GM13976 (cell line): ENCODE measurements at regions of chr9 and their contacts with region 1.

Region 1: GRCh38 chr9:2132484-2133082 is 117.4 kb downstream of the SMARCA2 start:
- DNase-seq: no peak
- CTCF ChIP-seq: peak; percentile 41

Region 2: DNA sequence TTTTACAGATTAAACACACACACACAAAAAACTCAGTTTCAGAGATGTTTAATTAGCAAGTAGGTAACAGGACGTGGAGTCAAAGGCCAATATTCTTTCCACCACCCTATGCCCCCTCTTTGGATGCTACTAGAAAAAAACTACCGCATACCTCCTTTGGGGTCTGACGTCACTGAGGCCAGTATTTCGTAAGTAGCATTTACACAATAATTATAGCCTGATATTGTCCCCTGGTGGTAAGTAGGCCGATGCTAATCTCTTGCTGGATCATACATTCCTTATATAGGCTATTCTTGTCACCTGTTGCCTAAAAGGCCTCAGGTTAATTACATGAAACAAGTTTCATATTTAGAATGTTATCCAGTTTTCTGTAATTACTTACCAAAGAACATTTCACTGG is 138.4 kb before region 1 on chr9:
- in situ Hi-C with region 1: no loop called
- DNase-seq: no peak
- CTCF ChIP-seq: no peak

Region 3: DNA sequence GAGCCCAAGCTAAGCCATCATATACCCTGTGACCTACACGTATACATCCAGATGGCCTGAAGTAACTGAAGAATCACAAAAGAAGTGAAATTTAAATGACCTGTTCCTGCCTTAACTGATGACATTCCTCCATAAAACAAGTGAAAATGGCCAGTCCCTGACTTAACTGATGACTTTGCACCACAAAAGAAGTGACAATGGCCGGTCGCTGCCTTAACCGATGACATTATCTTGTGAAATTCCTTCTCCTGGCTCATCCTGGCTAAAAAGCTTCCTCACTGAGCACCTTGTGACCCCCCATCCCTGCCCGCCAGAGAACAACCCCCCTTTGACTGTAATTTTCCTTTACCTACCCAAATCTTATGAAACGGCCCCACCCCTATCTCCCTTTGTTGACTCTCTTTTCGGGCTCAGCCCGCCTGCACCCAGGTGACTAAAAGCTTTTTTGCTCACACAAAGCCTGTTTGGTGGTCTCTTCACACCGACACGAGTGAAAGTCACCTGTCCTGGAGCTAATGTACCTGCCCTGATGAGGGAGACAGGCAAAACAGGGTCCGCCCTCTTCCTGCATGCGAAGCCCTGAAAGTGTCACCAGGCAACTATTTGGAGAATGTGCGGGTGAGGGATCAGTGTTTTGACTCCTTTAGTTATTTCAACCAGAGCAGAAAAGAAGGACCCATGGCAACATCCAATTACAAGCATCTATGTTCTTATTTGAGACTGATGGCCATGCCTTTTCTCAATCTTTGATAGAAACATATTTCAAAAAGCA is 148.6 kb after region 1 on chr9:
- in situ Hi-C with region 1: no loop called
- DNase-seq: no peak
- CTCF ChIP-seq: no peak

Region 4: GRCh38 chr9:2613730-2614271 is 481.2 kb after region 1 on chr9:
- in situ Hi-C with region 1: no loop called
- DNase-seq: no peak
- CTCF ChIP-seq: no peak

Region 5: DNA sequence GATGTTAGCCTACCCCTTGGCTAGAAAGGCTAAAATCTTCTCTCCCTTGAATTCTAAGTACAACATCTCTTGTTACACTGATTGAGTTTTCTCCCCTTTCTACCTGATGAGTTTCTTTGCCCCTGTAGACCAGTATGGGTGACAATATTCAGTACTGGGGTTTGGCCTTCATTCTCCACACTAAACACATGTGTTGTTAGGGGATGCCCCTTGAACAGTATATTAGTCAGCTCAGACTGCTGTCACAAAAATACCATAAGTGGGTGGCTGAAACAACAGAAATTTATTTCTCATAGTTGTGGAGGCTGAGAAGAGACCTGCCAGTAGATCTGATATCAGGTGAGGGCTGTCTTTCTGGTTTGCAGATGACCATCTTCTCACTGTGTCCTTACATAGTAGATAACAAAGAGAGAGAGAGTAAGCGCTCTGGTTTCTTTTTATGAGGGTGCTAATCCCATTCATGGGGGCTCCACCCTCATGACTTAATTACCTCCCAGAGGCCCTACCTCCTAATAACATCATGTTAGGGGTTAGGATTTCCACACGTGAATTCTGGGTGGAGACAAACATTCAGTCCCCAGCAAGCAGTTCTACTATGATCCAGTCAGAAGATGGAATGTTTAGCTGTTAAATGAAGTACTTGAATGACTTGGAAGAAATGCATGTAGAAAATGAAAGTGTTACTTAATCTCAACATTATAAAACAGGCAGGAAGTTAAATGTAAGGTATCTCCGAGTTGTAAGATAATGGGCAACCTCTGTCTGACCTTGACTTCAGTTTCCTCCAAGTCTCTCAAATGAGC is 506.5 kb after region 1 on chr9:
- in situ Hi-C with region 1: loop called (anchors 25 kb)
- DNase-seq: peak; percentile 60
- CTCF ChIP-seq: no peak